ENCODE measurements at regions of chr1 and their contacts with region 1.

Region 1: DNA sequence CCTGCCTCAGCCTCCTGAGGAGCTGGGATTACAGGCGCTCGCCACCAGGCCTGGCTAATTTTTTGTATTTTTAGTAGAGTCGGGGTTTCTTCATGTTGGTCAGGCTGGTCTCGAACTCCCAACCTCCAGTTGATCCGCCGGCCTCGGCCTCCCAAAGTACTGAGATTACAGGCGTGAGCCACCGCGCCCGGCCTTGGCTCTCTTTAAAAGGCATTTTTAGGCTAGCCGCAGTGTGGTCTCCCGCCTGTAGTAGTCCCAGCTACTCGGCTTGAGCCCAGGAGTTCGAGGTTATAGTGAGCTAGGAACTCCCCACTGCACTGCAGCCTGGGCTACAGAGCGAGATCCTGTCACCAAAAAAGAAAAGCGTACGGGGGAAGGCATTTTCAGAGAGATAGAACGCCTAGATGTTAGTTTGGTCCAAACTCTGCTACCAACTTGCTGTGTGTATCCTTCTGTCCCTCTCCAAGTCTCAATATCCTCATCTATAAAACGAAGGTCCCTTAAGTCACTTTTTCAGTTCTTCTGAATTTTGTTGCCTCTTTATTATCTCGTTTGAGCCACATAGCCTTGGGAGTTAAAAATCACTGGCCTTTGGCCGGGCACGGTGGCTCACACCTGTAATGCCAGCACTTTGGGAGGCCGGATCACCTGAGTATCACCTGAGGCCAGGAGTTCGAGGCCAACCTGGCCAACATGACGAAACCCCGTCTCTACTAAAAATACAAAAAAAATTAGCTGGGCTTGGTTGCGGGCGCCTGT is 734 bp downstream of the MED18 start:
- DNase-seq: peak; percentile 25
- H3K4me3 ChIP-seq: peak overlapping the region; percentile 62 to 93 (median 78)
- H3K27ac ChIP-seq: peak overlapping the region; percentile 91
- H3K4me1 ChIP-seq: peaks cover 11% of the 10 kb centered on the region
- H3K27me3 ChIP-seq: no peaks in the 10 kb centered on the region
- CTCF ChIP-seq: no peak
- POLR2A ChIP-seq: no peak

Region 2: DNA sequence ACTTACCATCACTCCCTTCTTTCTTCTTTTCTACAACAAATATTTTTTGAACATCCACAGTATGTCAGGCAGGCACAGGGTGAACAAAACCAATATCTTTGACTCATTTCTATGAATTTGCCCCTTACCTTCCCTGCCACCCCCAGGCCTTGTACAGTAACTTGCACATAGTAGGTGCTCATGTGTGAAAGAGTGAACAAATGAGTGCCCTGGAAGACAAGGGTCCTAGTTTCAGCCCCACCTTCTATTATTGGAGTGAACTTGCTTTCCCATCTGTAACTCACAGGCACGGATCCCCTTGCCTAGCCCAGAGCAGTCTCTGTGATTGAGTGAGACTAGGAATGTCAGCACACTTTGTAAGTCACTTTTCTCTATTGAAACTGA is 1490.2 kb before region 1 on chr1:
- CTCF ChIA-PET with region 1: no interaction called
- POLR2A ChIA-PET with region 1: interaction called, 13 read pairs
- dilution Hi-C with region 1: no loop called
- intact Hi-C with region 1: no loop called
- DNase-seq: no peak
- H3K4me3 ChIP-seq: no peak overlapping the region
- H3K27ac ChIP-seq: no peak overlapping the region
- H3K4me1 ChIP-seq: no peaks in the 10 kb centered on the region
- H3K27me3 ChIP-seq: no peaks in the 10 kb centered on the region
- CTCF ChIP-seq: no peak
- POLR2A ChIP-seq: no peak

Region 3: GRCh38 chr1:28273216-28273860 is 56.2 kb before region 1 on chr1:
- CTCF ChIA-PET with region 1: no interaction called
- POLR2A ChIA-PET with region 1: no interaction called
- dilution Hi-C with region 1: no loop called
- intact Hi-C with region 1: no loop called
- DNase-seq: no peak
- H3K4me3 ChIP-seq: no peak overlapping the region
- H3K27ac ChIP-seq: no peak overlapping the region
- H3K4me1 ChIP-seq: peaks cover 3% of the 10 kb centered on the region
- H3K27me3 ChIP-seq: no peaks in the 10 kb centered on the region
- CTCF ChIP-seq: no peak
- POLR2A ChIP-seq: no peak

Measured in endothelial cell of umbilical vein (primary cell).